ENCODE measurements at regions of chr5 and their contacts with region 1.

Region 1: DNA sequence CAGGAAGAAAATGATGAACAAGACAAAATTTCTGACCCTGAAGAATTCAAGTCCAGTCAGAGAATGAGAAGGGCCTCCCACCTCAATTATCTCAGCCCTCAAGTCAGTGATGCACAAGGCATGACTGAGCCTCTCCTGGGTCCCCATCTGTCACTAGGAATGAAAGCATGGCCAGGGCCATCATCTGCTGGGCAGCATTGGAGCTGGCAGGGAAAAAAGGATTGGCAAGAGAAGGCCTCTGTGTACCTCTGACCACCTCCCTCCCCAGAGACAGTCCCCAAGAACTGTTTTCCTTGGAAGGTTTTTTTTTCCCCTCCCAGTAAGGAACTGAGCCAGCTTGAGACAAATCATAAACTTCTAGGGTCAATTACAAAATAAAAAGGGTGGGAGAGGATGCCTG is 76.7 kb downstream of the KLHL3 start:
- DNase-seq: no peak
- H3K4me3 ChIP-seq: no peak overlapping the region
- H3K27ac ChIP-seq: no peak overlapping the region
- H3K4me1 ChIP-seq: peaks cover 0 to 5% (median 2%) of the 10 kb centered on the region in 4 donors
- H3K27me3 ChIP-seq: no peaks in the 10 kb centered on the region
- CTCF ChIP-seq: no peak
- EP300 ChIP-seq: no peak
- POLR2A ChIP-seq: no peak

Region 2: GRCh38 chr5:137743031-137743640 is 83.9 kb after region 1 on chr5:
- intact Hi-C with region 1: loop called (anchors 5 kb)
- DNase-seq: peak; percentile 40 to 91
- H3K4me3 ChIP-seq: no peak overlapping the region
- H3K27ac ChIP-seq: no peak overlapping the region
- H3K4me1 ChIP-seq: peaks cover 0 to 6% (median 2%) of the 10 kb centered on the region in 4 donors
- H3K27me3 ChIP-seq: no peaks in the 10 kb centered on the region
- CTCF ChIP-seq: peak in 5 of 7 experiments; percentile 17 to 55 (median 55)
- EP300 ChIP-seq: no peak
- POLR2A ChIP-seq: no peak